Motor neuron (in vitro differentiated cells): ENCODE measurements at regions of chr1 and their contacts with region 1.

Region 1: GRCh38 chr1:176416777-176417176 is 46.2 kb upstream of the PAPPA2 start:
- ATAC-seq: no peak
- H3K4me3 ChIP-seq: no peak overlapping the region
- H3K27ac ChIP-seq: no peak overlapping the region
- H3K4me1 ChIP-seq: peaks cover 2 to 6% of the 10 kb centered on the region in 2 donors

Region 2: GRCh38 chr1:176330782-176331181 is 86.0 kb before region 1 on chr1:
- in situ Hi-C with region 1: no loop called
- ATAC-seq: peak in 5 of 8 experiments; percentile 36 to 87 (median 86)
- H3K4me3 ChIP-seq: no peak overlapping the region
- H3K27ac ChIP-seq: no peak overlapping the region
- H3K4me1 ChIP-seq: peaks cover 13 to 14% of the 10 kb centered on the region in 2 donors

Region 3: GRCh38 chr1:176857632-176858031 is 440.9 kb after region 1 on chr1:
- in situ Hi-C with region 1: loop called in 1 of 9 experiments (anchors 25 kb)
- ATAC-seq: peak in 2 of 8 experiments; percentile 69 to 86
- H3K4me3 ChIP-seq: no peak overlapping the region
- H3K27ac ChIP-seq: no peak overlapping the region
- H3K4me1 ChIP-seq: peaks cover 8% of the 10 kb centered on the region in 2 donors